Psoas muscle (tissue), 8 donors: ENCODE measurements at regions of chr11 and their contacts with region 1.

Region 1: DNA sequence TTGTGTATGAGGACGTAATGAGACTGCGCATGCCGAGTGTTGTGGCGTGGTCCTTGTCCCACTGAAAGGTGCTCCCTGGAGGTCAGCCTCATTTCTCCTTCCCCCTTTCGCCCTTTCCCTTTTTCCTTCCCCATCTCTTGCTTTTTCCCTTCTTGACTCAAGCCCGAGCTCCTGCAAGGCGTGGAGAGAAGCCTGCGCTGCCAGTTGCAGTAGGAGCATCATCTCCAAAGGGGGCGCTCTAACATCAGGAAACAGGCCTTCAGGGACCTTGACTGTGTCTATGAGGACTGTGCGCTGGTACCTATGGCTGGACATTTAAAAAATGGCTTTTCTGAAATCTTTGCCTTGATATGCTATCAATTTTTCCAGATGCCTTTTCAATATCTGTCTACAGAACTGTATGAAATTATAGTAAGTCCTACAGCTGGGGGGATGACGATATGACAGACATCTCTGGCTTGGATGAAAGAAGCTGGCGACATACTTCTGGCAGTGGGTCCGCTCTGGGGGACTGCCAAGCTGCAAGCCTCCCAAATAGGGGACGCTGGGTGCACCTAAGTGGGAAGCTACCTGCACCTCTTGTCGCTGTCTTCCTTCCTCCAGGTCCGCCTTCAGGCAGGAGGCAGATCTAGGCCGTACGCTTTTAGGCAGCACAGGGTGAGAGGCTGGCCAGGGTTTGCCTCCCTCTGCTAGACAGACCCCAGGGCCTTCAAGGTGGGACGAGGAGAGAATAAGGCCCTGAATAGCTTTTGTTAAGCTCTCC is 96.5 kb downstream of the NXPE2 start:
- DNase-seq: peak; percentile 26 to 55
- ATAC-seq: peak; percentile 85 to 95 (median 90)
- H3K4me3 ChIP-seq: no peak overlapping the region
- H3K27ac ChIP-seq: no peak overlapping the region
- H3K4me1 ChIP-seq: no peaks in the 10 kb centered on the region
- H3K27me3 ChIP-seq: no peaks in the 10 kb centered on the region
- CTCF ChIP-seq: peak; percentile 72

Region 2: GRCh38 chr11:114395736-114396135 is 379.0 kb before region 1 on chr11:
- intact Hi-C with region 1: no loop called
- DNase-seq: no peak
- ATAC-seq: no peak
- H3K4me3 ChIP-seq: no peak overlapping the region
- H3K27ac ChIP-seq: no peak overlapping the region
- H3K4me1 ChIP-seq: peaks cover 18% of the 10 kb centered on the region
- H3K27me3 ChIP-seq: no peaks in the 10 kb centered on the region
- CTCF ChIP-seq: peak; percentile 11

Region 3: DNA sequence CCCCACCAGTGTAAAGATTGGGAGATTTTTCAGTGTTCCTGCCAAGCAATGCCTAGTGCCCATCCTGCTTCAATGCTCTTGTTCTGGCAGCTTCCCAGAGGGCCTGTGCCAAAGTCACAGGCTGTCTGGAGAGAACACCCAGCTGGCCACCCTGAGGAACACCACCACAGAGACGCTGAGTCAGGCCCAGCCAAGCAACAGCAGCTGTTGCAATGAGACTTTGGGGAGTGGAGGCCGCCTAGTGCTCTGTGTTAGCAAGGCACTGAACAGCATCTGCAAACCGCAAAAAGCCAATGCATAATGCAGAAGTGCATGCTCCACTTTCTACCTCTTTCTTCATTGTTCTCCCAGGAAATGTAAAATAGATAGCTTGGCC is 71.6 kb after region 1 on chr11:
- intact Hi-C with region 1: loop called in 1 of 2 experiments (anchors 5 kb)
- DNase-seq: peak; percentile 46 to 82
- ATAC-seq: peak; percentile 95 to 100 (median 98)
- H3K4me3 ChIP-seq: no peak overlapping the region
- H3K27ac ChIP-seq: no peak overlapping the region
- H3K4me1 ChIP-seq: peaks cover 11% of the 10 kb centered on the region
- H3K27me3 ChIP-seq: no peaks in the 10 kb centered on the region
- CTCF ChIP-seq: peak; percentile 28

Region 4: DNA sequence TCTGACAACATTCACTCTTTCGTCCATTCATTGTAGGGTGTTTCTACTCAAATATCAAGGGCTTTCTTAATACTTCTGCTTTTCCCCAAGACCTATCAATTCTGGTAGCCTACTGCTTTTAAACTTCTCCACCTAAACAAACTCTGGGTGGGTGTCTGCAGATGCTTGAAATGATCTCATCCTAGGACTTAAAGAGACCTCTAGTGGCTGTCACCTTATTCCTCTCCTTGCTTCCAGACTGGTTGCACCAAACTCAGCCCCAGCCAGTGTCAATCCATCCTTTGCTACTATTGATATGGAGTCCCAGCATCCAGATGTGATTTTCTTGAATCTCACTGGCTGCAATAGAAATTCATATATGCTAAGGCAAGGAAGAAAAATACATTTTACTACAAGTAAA is 178.3 kb after region 1 on chr11:
- intact Hi-C with region 1: loop called (anchors 2 to 5 kb)
- DNase-seq: no peak
- ATAC-seq: no peak
- H3K4me3 ChIP-seq: no peak overlapping the region
- H3K27ac ChIP-seq: no peak overlapping the region
- H3K4me1 ChIP-seq: no peaks in the 10 kb centered on the region
- H3K27me3 ChIP-seq: no peaks in the 10 kb centered on the region
- CTCF ChIP-seq: peak; percentile 31

Region 5: DNA sequence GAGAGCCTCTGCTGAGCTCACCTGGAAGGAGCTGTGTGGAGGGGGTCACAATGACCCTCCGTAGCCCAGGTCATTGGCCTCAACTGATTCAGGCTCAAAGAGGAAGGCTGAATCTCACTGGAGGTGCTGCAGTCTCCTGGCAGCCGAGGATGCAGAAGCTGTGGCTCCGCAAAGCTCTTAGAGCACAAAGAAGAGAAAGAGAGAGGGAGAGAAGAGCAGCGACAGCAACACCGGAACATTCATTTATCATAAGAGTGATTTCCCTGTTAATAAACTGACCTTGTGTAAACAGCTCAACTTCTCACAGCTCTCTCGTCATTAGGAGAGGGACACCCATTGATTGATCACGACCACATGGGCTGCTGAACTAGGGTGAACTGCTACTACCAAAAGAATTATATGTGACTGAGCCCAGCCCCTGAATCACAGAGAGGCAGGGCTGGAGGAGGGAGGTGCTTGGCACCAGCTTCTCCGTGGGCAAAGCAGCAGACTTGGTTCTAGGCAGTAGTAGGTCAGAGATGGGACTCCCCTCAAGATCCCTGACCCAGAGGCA is 185.2 kb after region 1 on chr11:
- intact Hi-C with region 1: loop called in 1 of 2 experiments (anchors 5 kb)
- DNase-seq: no peak
- ATAC-seq: no peak
- H3K4me3 ChIP-seq: no peak overlapping the region
- H3K27ac ChIP-seq: no peak overlapping the region
- H3K4me1 ChIP-seq: no peaks in the 10 kb centered on the region
- H3K27me3 ChIP-seq: peaks cover 0 to under 1% (median 0%) of the 10 kb centered on the region in 3 donors
- CTCF ChIP-seq: no peak

Region 6: GRCh38 chr11:115222218-115222862 is 447.6 kb after region 1 on chr11:
- intact Hi-C with region 1: no loop called
- DNase-seq: no peak
- ATAC-seq: peak; percentile 44 to 85 (median 68)
- H3K4me3 ChIP-seq: no peak overlapping the region
- H3K27ac ChIP-seq: peak overlapping the region; percentile 88
- H3K4me1 ChIP-seq: peaks cover 33% of the 10 kb centered on the region
- H3K27me3 ChIP-seq: no peaks in the 10 kb centered on the region
- CTCF ChIP-seq: no peak